Natural killer cell (primary cell): ENCODE measurements at regions of chr17 and their contacts with region 1.

Region 1: DNA sequence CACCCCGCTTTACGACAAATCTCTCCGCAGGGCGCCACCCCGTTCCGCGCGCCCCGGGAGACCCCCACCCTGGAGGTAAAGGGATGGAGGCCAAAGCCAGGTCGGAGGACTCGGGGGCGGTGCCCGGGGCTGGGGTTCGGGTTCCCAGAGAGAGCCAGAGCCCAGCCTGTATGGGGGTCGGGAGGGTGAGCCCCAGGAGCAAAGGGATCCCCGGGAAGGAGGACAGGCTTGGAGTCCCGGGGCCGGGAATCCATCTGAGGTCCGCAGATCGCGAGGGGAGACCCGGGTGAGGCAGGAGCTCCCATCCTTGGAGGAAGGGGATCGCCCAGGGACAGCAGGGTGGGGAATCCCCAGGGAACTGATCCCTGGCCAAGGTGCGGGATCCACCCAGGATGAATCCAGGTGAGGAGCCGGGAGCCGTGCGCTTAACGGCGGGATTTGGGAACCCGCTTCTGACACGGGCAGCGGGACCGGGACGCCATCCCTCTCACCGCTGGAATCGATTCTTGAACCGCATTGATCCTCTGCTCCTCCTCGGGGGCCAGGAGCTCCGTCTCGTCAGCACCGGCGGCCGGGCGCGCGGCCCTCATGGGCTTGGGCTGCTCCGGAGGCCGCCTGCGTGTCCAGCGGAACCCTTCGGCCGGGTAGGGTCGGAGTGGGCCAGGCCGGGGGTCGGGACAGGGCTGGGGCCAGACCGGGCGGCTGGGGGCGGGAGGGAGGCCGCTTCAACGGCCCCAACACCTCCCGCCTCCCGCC is at the start of gene MMD:
- DNase-seq: peak in 1 of 2 donors; percentile 26
- ATAC-seq: no peak
- H3K4me3 ChIP-seq: peak within 1 kb of the TSS; percentile 86
- H3K4me3 Mint-ChIP-seq: peak within 1 kb of the TSS; percentile 91
- H3K27ac ChIP-seq: peak within 1 kb of the TSS; percentile 85
- H3K27ac Mint-ChIP-seq: peak within 1 kb of the TSS; percentile 86 to 93
- H3K4me1 ChIP-seq: peaks cover 15% of the 10 kb centered on the region
- H3K4me1 Mint-ChIP-seq: peaks cover 45 to 53% of the 10 kb centered on the region in 2 donors
- H3K27me3 ChIP-seq: peaks cover 7% of the 10 kb centered on the region
- H3K27me3 Mint-ChIP-seq: peaks cover 19 to 20% of the 10 kb centered on the region in 2 donors
- CTCF ChIP-seq: no peak
- total RNA-seq, gene MMD: 18.7 to 33.5 (median 27.9) TPM

Region 2: GRCh38 chr17:54968262-54968987 is 452.9 kb before region 1 on chr17 and contains the starts of genes COX11 and STXBP4:
- intact Hi-C with region 1: loop called (anchors 2 kb)
- DNase-seq: peak; percentile 92 to 98
- ATAC-seq: peak; percentile 96 to 98 (median 97)
- H3K4me3 ChIP-seq: peak within 1 kb of the TSS; percentile 91
- H3K4me3 Mint-ChIP-seq: no peak within 1 kb of the TSS
- H3K27ac ChIP-seq: peak within 1 kb of the TSS; percentile 76
- H3K27ac Mint-ChIP-seq: no peak within 1 kb of the TSS
- H3K4me1 ChIP-seq: peaks cover 14% of the 10 kb centered on the region
- H3K4me1 Mint-ChIP-seq: no peaks in the 10 kb centered on the region
- H3K27me3 ChIP-seq: no peaks in the 10 kb centered on the region
- H3K27me3 Mint-ChIP-seq: no peaks in the 10 kb centered on the region
- CTCF ChIP-seq: peak; percentile 13
- total RNA-seq, gene COX11: 20.2 to 33.7 (median 26.9) TPM
- total RNA-seq, gene STXBP4: 4.9 to 10.3 (median 7.6) TPM

Region 3: GRCh38 chr17:55356434-55357328 is 64.7 kb before region 1 on chr17:
- intact Hi-C with region 1: no loop called
- DNase-seq: peak; percentile 30 to 78
- ATAC-seq: peak; percentile 81 to 90 (median 81)
- H3K4me3 ChIP-seq: no peak overlapping the region
- H3K4me3 Mint-ChIP-seq: no peak overlapping the region
- H3K27ac ChIP-seq: no peak overlapping the region
- H3K27ac Mint-ChIP-seq: no peak overlapping the region
- H3K4me1 ChIP-seq: no peaks in the 10 kb centered on the region
- H3K4me1 Mint-ChIP-seq: peaks cover 5 to 6% of the 10 kb centered on the region in 2 donors
- H3K27me3 ChIP-seq: peaks cover 5% of the 10 kb centered on the region
- H3K27me3 Mint-ChIP-seq: peaks cover 14 to 22% of the 10 kb centered on the region in 2 donors
- CTCF ChIP-seq: peak; percentile 84

Region 4: DNA sequence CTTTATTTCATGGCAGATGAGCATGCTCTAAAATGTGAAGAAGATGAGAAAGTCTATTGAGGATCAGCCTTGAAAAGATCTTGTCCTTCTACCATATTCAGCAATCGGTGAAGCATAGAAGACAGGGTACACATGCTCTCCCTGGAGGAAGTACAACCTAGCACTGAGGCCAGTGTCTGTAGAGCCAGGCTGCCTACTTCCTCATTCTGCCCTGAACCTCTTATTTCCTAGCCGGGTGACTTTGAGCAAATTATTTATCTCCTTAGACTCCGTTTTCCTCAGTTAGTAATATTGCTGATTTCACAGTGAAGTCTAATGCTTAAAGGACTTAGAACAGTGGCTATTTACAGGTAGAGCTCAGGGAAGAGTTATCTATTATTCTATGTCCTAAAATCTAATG is 242.9 kb after region 1 on chr17:
- intact Hi-C with region 1: no loop called
- DNase-seq: no peak
- ATAC-seq: peak in 1 of 3 donors; percentile 52
- H3K4me3 ChIP-seq: no peak overlapping the region
- H3K4me3 Mint-ChIP-seq: no peak overlapping the region
- H3K27ac ChIP-seq: no peak overlapping the region
- H3K27ac Mint-ChIP-seq: no peak overlapping the region
- H3K4me1 ChIP-seq: no peaks in the 10 kb centered on the region
- H3K4me1 Mint-ChIP-seq: no peaks in the 10 kb centered on the region
- H3K27me3 ChIP-seq: no peaks in the 10 kb centered on the region
- H3K27me3 Mint-ChIP-seq: peaks cover 3 to 11% of the 10 kb centered on the region in 2 donors
- CTCF ChIP-seq: no peak